OCI-LY7 (cell line): ENCODE measurements at regions of chr6 and their contacts with region 1.

Region 1: DNA sequence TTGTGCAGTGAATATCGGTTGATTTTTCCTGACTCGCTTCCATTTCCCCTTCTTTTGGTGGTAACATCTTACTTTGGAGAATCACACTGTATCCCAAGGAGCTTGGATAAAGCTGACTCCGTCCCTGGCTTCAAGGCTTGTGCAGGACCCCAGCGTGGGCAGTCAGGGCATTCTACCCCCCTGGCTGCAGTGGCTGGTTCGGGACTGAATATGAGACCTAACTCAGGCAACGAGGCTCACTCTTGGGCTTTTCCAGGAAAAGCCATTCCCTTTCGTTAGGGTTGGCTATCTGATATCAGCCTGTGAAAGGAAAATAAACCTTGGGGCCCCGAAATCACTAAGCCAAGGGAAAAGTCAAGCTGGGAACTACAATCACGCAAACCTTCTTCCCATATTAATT is 30.1 kb upstream of the GJA1 start:
- DNase-seq: no peak
- H3K4me3 ChIP-seq: no peak overlapping the region
- H3K27ac ChIP-seq: no peak overlapping the region
- H3K4me1 ChIP-seq: no peaks in the 10 kb centered on the region
- CTCF ChIP-seq: no peak

Region 2: GRCh38 chr6:121418346-121418745 is 13.0 kb after region 1 on chr6:
- CTCF ChIA-PET with region 1: no interaction called
- POLR2A ChIA-PET with region 1: interaction called, 12 read pairs
- intact Hi-C with region 1: no loop called
- DNase-seq: no peak
- H3K4me3 ChIP-seq: no peak overlapping the region
- H3K27ac ChIP-seq: no peak overlapping the region
- H3K4me1 ChIP-seq: no peaks in the 10 kb centered on the region
- CTCF ChIP-seq: no peak